ENCODE measurements at regions of chr7 and their contacts with region 1.

Region 1: GRCh38 chr7:81594767-81595166 is 175.1 kb downstream of the HGF start:
- DNase-seq: no peak
- H3K4me3 ChIP-seq: no peak overlapping the region
- H3K27ac ChIP-seq: no peak overlapping the region
- H3K4me1 ChIP-seq: no peaks in the 10 kb centered on the region
- H3K27me3 ChIP-seq: no peaks in the 10 kb centered on the region
- CTCF ChIP-seq: no peak

Region 2: DNA sequence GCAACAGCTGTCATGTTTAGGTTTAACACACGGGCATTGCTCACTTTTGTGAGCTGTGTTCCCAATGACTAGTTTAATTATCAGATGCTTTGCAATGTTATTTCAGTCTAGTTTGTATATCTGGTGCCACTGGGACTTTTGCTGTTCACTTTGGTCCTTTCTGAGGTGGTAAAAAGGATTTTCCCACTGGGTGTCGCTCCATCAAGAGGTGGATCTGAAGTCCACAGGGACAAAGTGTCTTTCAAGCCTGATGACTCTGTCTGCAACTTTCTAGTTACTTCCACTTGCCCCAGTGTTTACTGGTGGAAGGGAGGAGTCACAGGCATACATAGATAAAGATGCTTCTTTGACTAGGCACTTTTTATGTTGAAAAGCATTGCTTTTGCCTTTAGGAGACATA is 67.1 kb before region 1 on chr7:
- CTCF ChIA-PET with region 1: no interaction called
- dilution Hi-C with region 1: loop called (anchors 5 kb)
- in situ Hi-C with region 1: no loop called
- intact Hi-C with region 1: no loop called
- DNase-seq: no peak
- H3K4me3 ChIP-seq: no peak overlapping the region
- H3K27ac ChIP-seq: no peak overlapping the region
- H3K4me1 ChIP-seq: no peaks in the 10 kb centered on the region
- H3K27me3 ChIP-seq: no peaks in the 10 kb centered on the region
- CTCF ChIP-seq: no peak

Region 3: DNA sequence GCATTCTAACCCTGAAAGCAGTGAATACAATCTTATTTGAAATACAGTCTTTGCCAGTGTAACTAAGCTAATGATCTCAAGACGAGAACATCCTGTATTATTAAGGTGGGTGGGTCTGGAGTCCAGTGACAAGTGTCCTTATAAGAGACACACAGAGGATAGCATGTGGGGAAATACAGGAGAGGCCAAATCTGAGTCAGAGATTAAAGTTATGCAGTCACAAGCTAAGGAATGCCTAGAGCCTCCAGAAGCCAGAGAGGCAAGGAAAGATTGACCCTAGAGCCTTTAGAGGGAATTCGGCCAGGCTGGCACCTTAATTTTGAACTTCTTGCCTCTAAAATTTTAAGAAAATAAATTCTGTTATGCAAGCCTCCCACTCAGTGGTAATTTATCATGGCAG is 262.6 kb after region 1 on chr7:
- CTCF ChIA-PET with region 1: no interaction called
- dilution Hi-C with region 1: no loop called
- in situ Hi-C with region 1: no loop called
- intact Hi-C with region 1: no loop called
- DNase-seq: peak; percentile 8
- H3K4me3 ChIP-seq: no peak overlapping the region
- H3K27ac ChIP-seq: no peak overlapping the region
- H3K4me1 ChIP-seq: no peaks in the 10 kb centered on the region
- H3K27me3 ChIP-seq: no peaks in the 10 kb centered on the region
- CTCF ChIP-seq: no peak